Naive thymus-derived CD4-positive, alpha-beta T cell (primary cell): ENCODE measurements at regions of chr6 and their contacts with region 1.

Region 1: DNA sequence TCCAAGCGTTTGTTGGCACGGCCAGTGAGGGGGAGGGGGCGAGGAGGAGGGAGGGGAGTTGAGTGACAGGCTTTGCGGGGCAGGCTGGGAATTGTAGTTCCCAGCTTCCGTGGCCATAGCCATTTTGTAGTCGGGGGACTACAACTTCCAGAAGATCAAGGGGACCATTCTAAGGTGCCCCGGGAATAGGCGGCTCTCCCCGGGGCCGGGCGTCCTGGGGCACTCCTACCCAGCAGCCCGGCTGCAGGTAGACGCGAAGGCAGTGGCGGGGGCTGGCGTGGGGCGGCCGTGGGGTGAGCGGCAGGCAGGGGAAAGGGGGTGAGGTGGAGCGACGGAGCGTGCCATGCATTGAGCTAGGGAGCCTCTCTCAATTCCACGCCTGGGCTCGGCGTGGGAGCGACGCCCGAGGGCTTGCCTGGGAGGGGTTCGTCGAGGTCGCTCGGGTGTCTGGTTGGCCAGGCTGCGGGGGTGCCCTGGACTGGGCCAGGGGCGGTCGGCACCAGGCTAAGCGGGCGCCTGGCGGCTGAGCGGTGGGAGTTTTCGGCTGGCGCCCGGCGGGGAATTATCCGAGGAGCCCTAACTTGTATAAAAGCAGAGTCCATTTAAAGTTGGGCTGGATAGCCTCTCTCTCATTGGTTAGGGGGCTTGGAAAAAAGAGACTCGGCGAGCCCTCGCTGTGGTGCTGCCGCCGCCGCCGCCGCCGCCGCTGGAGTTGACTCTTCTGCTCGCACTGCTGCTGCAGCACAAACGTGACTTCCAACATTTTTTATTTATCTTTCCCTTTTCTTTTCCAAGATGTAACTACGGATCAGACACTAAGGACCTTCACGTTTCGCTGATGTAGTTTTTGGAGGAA is at the start of gene JARID2:
- DNase-seq: peak; percentile 86 to 97 (median 94)
- ATAC-seq: peak; percentile 66
- H3K4me3 ChIP-seq: peak within 1 kb of the TSS; percentile 93
- H3K4me3 Mint-ChIP-seq: peak within 1 kb of the TSS; percentile 94 to 100 (median 99)
- H3K27ac ChIP-seq: peak within 1 kb of the TSS; percentile 93
- H3K27ac Mint-ChIP-seq: peak within 1 kb of the TSS; percentile 94 to 99 (median 97)
- H3K4me1 ChIP-seq: peaks cover 8 to 10% of the 10 kb centered on the region in 2 donors
- H3K4me1 Mint-ChIP-seq: peaks cover 13 to 39% (median 26%) of the 10 kb centered on the region in 7 donors
- H3K27me3 ChIP-seq: no peaks in the 10 kb centered on the region
- H3K27me3 Mint-ChIP-seq: peaks cover 0 to 2% (median 0%) of the 10 kb centered on the region in 5 donors
- total RNA-seq, gene JARID2: 23.4 to 39.6 (median 29.9) TPM

Region 2: GRCh38 chr6:14276667-14277404 is 968.8 kb before region 1 on chr6:
- CTCF ChIA-PET with region 1: no interaction called
- POLR2A ChIA-PET with region 1: interaction called, 6 read pairs
- intact Hi-C with region 1: loop called (anchors 1 to 5 kb)
- DNase-seq: peak in 7 of 9 donors; percentile 73 to 90 (median 85)
- ATAC-seq: peak; percentile 99
- H3K4me3 ChIP-seq: peak overlapping the region; percentile 34
- H3K4me3 Mint-ChIP-seq: peak overlapping the region; percentile 72 to 96 (median 80)
- H3K27ac ChIP-seq: peak overlapping the region; percentile 47
- H3K27ac Mint-ChIP-seq: peak overlapping the region; percentile 82 to 97 (median 91)
- H3K4me1 ChIP-seq: peaks cover 20 to 39% of the 10 kb centered on the region in 2 donors
- H3K4me1 Mint-ChIP-seq: peaks cover 33 to 64% (median 55%) of the 10 kb centered on the region in 7 donors
- H3K27me3 ChIP-seq: no peaks in the 10 kb centered on the region
- H3K27me3 Mint-ChIP-seq: no peaks in the 10 kb centered on the region

Region 3: DNA sequence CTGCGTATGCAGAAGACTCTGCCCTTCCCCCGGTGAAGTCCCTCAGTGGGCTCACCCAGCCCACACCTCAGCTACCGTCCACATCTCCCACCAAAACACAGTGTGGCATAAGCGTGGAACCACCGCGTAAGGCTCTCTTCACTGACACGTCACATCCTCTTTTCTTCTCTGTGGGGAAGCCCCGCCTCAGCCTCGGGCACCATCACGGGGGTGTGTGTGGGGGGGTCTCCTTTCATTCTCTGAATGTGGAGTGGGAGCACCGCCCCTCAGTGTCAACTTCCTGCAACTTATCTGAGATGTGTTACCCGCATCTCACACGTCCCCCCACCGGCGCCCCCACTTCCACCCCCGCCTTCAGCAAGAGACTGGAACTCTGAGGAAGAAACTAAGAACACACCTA is 388.1 kb before region 1 on chr6:
- CTCF ChIA-PET with region 1: no interaction called
- POLR2A ChIA-PET with region 1: no interaction called
- intact Hi-C with region 1: loop called in 1 of 2 experiments (anchors 5 kb)
- DNase-seq: peak; percentile 54 to 86 (median 73)
- ATAC-seq: peak; percentile 99
- H3K4me3 ChIP-seq: peak overlapping the region; percentile 55
- H3K4me3 Mint-ChIP-seq: peak overlapping the region; percentile 72 to 95 (median 78)
- H3K27ac ChIP-seq: peak overlapping the region; percentile 59
- H3K27ac Mint-ChIP-seq: peak overlapping the region; percentile 86 to 98 (median 95)
- H3K4me1 ChIP-seq: peaks cover 8 to 20% of the 10 kb centered on the region in 2 donors
- H3K4me1 Mint-ChIP-seq: peaks cover 13 to 40% (median 16%) of the 10 kb centered on the region in 7 donors
- H3K27me3 ChIP-seq: no peaks in the 10 kb centered on the region
- H3K27me3 Mint-ChIP-seq: no peaks in the 10 kb centered on the region

Region 4: DNA sequence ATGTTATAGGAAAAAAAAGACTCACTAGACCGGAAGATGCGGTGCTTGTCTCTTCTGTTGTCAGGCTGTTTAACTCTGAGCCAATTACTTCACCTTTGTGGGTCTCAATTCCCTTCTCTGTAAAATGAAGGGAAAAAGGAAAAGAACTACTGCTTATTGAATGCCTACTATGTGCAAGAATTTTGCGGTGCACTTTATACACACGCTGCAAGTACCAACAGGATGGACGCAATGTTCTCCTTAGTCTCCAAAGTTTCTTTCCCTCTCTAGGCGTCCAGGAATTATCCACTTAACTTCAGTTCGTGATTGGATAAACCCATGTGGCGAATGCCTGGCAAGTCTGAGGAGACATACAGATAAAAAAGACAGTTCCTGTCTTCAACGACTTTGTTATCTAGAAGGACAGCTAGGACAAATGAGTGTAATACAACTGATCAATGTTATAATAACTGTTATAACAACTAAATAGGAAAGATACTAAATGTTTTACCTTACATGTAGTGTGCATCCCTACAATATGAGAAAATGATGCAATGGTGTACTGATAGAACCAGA is 68.7 kb before region 1 on chr6:
- CTCF ChIA-PET with region 1: no interaction called
- POLR2A ChIA-PET with region 1: no interaction called
- intact Hi-C with region 1: no loop called
- DNase-seq: no peak
- ATAC-seq: no peak
- H3K4me3 ChIP-seq: no peak overlapping the region
- H3K4me3 Mint-ChIP-seq: no peak overlapping the region
- H3K27ac ChIP-seq: no peak overlapping the region
- H3K27ac Mint-ChIP-seq: no peak overlapping the region
- H3K4me1 ChIP-seq: no peaks in the 10 kb centered on the region
- H3K4me1 Mint-ChIP-seq: no peaks in the 10 kb centered on the region
- H3K27me3 ChIP-seq: no peaks in the 10 kb centered on the region
- H3K27me3 Mint-ChIP-seq: no peaks in the 10 kb centered on the region

Region 5: GRCh38 chr6:15280028-15280427 is 34.4 kb after region 1 on chr6:
- CTCF ChIA-PET with region 1: no interaction called
- POLR2A ChIA-PET with region 1: interaction called, 3 read pairs
- intact Hi-C with region 1: loop called in 1 of 2 experiments (anchors 5 kb)
- DNase-seq: no peak
- ATAC-seq: no peak
- H3K4me3 ChIP-seq: no peak overlapping the region
- H3K4me3 Mint-ChIP-seq: peak overlapping the region in 5 of 10 donors; percentile 9 to 34 (median 22)
- H3K27ac ChIP-seq: no peak overlapping the region
- H3K27ac Mint-ChIP-seq: peak overlapping the region in 5 of 9 donors; percentile 8 to 66 (median 36)
- H3K4me1 ChIP-seq: peaks cover 4 to 25% of the 10 kb centered on the region in 2 donors
- H3K4me1 Mint-ChIP-seq: peaks cover 62 to 87% (median 80%) of the 10 kb centered on the region in 7 donors
- H3K27me3 ChIP-seq: no peaks in the 10 kb centered on the region
- H3K27me3 Mint-ChIP-seq: no peaks in the 10 kb centered on the region

Region 6: DNA sequence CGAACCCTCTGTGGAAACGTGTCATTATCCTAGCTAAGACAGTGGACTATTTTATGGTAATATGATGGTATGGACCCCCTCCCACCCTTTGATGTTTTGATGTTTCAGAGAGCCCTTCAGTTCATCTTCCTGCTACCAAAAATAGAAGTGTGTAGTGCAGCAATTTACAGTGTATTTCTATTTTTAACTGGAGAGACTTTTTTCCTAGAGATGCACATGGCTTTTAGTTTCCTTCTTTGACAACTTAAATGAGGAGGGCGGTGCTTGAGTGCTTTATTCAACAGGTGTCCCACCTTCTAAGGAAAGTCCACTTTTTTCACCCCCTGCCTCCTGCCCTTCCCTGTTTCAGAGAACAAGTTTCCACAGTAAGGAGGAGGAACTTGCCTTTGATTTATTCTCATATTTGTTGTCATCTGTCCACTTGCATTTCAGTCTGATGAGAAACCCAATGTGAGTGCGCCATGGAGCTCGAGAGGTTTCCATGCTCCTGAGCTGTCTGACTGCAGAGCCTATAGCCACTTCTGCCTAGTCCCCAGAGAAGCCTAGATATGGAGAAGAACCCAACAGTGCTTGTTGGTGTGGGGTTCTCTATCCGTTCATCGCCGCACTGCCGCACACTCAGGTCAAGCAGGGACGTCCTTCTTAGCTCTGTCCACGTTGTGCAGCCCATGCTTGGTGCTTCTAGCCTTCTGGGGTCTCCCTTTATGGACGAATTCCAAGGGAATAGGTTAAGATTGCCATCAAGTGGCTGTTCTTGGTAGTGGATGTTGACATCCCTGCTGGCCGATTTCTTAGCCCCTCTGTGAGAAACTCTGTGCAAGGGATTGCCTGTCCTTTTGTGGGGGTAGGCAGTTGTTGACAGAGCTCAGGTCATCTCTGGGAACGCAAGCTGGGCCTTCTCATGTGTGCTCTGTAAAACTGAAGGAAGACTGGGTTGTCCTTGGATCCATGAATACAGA is 144.5 kb after region 1 on chr6:
- CTCF ChIA-PET with region 1: no interaction called
- POLR2A ChIA-PET with region 1: no interaction called
- intact Hi-C with region 1: loop called in 1 of 2 experiments (anchors 5 kb)
- DNase-seq: peak in 5 of 9 donors; percentile 15 to 36 (median 31)
- ATAC-seq: peak; percentile 39
- H3K4me3 ChIP-seq: no peak overlapping the region
- H3K4me3 Mint-ChIP-seq: peak overlapping the region in 9 of 10 donors; percentile 5 to 56 (median 41)
- H3K27ac ChIP-seq: no peak overlapping the region
- H3K27ac Mint-ChIP-seq: peak overlapping the region in 6 of 9 donors; percentile 17 to 62 (median 32)
- H3K4me1 ChIP-seq: peaks cover 0 to 24% of the 10 kb centered on the region in 2 donors
- H3K4me1 Mint-ChIP-seq: peaks cover 41 to 72% (median 66%) of the 10 kb centered on the region in 7 donors
- H3K27me3 ChIP-seq: no peaks in the 10 kb centered on the region
- H3K27me3 Mint-ChIP-seq: no peaks in the 10 kb centered on the region

Region 7: GRCh38 chr6:15854826-15855710 is 609.5 kb after region 1 on chr6:
- CTCF ChIA-PET with region 1: no interaction called
- POLR2A ChIA-PET with region 1: no interaction called
- intact Hi-C with region 1: no loop called
- DNase-seq: no peak
- ATAC-seq: no peak
- H3K4me3 ChIP-seq: no peak overlapping the region
- H3K4me3 Mint-ChIP-seq: no peak overlapping the region
- H3K27ac ChIP-seq: no peak overlapping the region
- H3K27ac Mint-ChIP-seq: no peak overlapping the region
- H3K4me1 ChIP-seq: no peaks in the 10 kb centered on the region
- H3K4me1 Mint-ChIP-seq: peaks cover 0 to 5% (median 0%) of the 10 kb centered on the region in 7 donors
- H3K27me3 ChIP-seq: no peaks in the 10 kb centered on the region
- H3K27me3 Mint-ChIP-seq: peaks cover 0 to 5% (median 4%) of the 10 kb centered on the region in 5 donors

Region 8: GRCh38 chr6:16128759-16129622 is 883.4 kb after region 1 on chr6 and contains the start of gene MYLIP:
- CTCF ChIA-PET with region 1: no interaction called
- POLR2A ChIA-PET with region 1: no interaction called
- intact Hi-C with region 1: loop called in 1 of 2 experiments (anchors 1 kb)
- DNase-seq: peak; percentile 93 to 97 (median 96)
- ATAC-seq: peak; percentile 93
- H3K4me3 ChIP-seq: peak within 1 kb of the TSS; percentile 91
- H3K4me3 Mint-ChIP-seq: peak within 1 kb of the TSS; percentile 93 to 100 (median 96)
- H3K27ac ChIP-seq: peak within 1 kb of the TSS; percentile 97
- H3K27ac Mint-ChIP-seq: peak within 1 kb of the TSS; percentile 76 to 98 (median 95)
- H3K4me1 ChIP-seq: peaks cover 30 to 39% of the 10 kb centered on the region in 2 donors
- H3K4me1 Mint-ChIP-seq: peaks cover 20 to 50% (median 35%) of the 10 kb centered on the region in 7 donors
- H3K27me3 ChIP-seq: no peaks in the 10 kb centered on the region
- H3K27me3 Mint-ChIP-seq: peaks cover 0 to 25% (median 0%) of the 10 kb centered on the region in 5 donors
- total RNA-seq, gene MYLIP: 17.8 to 215 (median 23.0) TPM